ENCODE measurements at regions of chr17 and their contacts with region 1.

Region 1: GRCh38 chr17:27805520-27806146 is 5.3 kb upstream of the NOS2 start:
- DNase-seq: peak; percentile 14
- H3K4me3 ChIP-seq: peak overlapping the region; percentile 34
- CTCF ChIP-seq: peak; percentile 85

Region 2: GRCh38 chr17:27559506-27560481 is 245.8 kb before region 1 on chr17:
- CTCF ChIA-PET with region 1: no interaction called
- POLR2A ChIA-PET with region 1: no interaction called
- DNase-seq: no peak
- H3K4me3 ChIP-seq: peak overlapping the region; percentile 12; the same call in 1 of the 2 replicates
- CTCF ChIP-seq: peak; percentile 21

Region 3: DNA sequence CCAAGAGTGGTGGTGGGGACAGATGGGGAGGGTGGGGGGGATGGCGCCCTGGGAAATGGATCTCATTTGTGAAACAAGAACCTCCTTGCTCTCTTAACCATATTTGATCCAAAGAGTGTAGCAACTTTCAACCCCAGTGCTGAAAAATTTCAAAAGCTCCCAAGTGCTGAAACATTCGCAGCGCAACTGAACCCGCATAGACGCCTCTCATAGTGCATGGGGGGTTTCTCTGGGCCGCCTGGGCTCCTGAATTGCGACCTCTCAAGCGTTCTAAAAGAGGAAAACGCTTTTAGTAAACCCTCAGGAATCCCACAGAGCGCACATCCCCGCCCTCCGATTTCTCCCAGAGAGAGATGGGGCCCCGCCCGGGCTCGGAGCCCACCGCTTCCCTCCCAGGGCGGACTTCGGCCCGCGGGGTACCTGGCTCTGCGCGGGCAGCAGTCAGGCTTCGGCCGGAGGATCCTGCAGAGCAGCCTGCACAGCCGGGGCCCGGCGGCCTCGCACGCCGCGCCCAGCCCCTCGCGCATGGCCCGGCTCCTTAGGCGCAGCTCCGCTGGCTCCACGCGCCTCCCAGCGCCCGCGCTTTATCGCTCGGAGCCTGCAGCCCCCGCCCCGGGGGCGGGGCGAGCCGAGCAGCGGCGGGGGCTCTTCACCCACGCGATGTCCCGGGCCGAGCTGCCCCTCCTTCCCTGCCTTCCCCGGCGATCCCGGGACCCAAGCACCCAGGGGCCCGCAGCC is 12.3 kb before region 1 on chr17:
- CTCF ChIA-PET with region 1: interaction called, 41 read pairs
- POLR2A ChIA-PET with region 1: no interaction called
- DNase-seq: no peak
- H3K4me3 ChIP-seq: no peak overlapping the region
- CTCF ChIP-seq: no peak

Region 4: DNA sequence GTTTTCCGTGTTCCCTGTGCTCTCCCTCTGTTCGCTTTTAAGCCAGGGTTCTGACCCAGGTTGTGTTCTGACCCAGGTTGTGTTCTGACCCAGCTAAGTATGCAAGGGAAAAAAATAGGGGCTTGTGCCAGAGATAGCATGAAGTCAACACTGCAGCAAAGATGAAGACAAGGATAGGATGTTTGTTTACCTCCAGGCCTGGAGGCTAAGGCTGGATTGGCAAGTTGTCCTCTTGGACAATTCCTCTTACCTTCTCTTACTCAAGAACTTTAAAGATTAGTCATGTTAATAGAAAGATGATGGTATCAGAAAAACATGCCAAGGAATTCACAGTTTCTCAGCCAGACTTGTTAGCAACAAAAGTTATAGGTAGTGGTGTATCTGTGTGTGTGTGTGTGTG is 68.1 kb after region 1 on chr17:
- CTCF ChIA-PET with region 1: interaction called, 201 read pairs
- POLR2A ChIA-PET with region 1: no interaction called
- DNase-seq: no peak
- H3K4me3 ChIP-seq: no peak overlapping the region
- CTCF ChIP-seq: no peak

Region 5: GRCh38 chr17:27879987-27880608 is 74.5 kb after region 1 on chr17:
- CTCF ChIA-PET with region 1: interaction called, 201 read pairs
- POLR2A ChIA-PET with region 1: interaction called, 4 read pairs
- DNase-seq: no peak
- H3K4me3 ChIP-seq: no peak overlapping the region
- CTCF ChIP-seq: peak; percentile 92

Region 6: GRCh38 chr17:27892866-27893769 is 87.5 kb after region 1 on chr17 and contains the start of gene LYRM9:
- CTCF ChIA-PET with region 1: interaction called, 21 read pairs
- POLR2A ChIA-PET with region 1: no interaction called
- DNase-seq: no peak
- H3K4me3 ChIP-seq: peak within 1 kb of the TSS; percentile 66
- CTCF ChIP-seq: peak; percentile 86

Measured in AG04449 (cell line).